Activated naive CD4-positive, alpha-beta T cell treated with anti-CD3 and anti-CD28 coated beads for 36 hours (primary cell): ENCODE measurements at regions of chr7 and their contacts with region 1.

Region 1: GRCh38 chr7:26864309-26865093 is at the start of gene SKAP2:
- DNase-seq: peak; percentile 94
- H3K4me3 Mint-ChIP-seq: peak within 1 kb of the TSS; percentile 83
- H3K27ac Mint-ChIP-seq: peak within 1 kb of the TSS; percentile 17
- H3K4me1 Mint-ChIP-seq: peaks cover 13% of the 10 kb centered on the region
- H3K27me3 Mint-ChIP-seq: peaks cover 46% of the 10 kb centered on the region
- total RNA-seq, gene SKAP2: 5.6 to 6.6 TPM

Region 2: GRCh38 chr7:26151953-26152781 is 712.3 kb before region 1 on chr7 and contains the start of gene NFE2L3:
- CTCF ChIA-PET with region 1: no interaction called
- intact Hi-C with region 1: loop called (anchors 10 kb)
- DNase-seq: peak; percentile 86
- H3K4me3 Mint-ChIP-seq: peak within 1 kb of the TSS; percentile 95
- H3K27ac Mint-ChIP-seq: peak within 1 kb of the TSS; percentile 98
- H3K4me1 Mint-ChIP-seq: peaks cover 50% of the 10 kb centered on the region
- H3K27me3 Mint-ChIP-seq: no peaks in the 10 kb centered on the region
- total RNA-seq, gene NFE2L3: 12.5 to 12.9 TPM

Region 3: DNA sequence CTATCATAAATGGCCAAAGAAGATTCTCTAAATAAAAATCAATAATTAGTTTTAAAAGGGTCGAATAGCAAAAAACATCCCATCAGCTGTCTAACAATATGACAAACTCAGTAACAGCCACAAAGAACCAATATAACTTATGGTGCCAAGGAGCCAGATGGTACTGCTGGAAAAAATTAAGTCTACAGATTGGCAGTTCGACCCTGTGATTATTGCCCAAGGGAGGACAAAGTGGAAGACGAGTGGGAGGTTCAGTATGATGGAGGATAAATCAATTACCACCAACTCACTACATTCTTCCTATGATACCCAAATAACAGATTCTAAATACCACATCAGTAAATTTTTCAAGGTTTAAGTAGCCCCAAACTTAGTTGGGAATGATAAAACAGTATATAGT is 49.1 kb before region 1 on chr7:
- CTCF ChIA-PET with region 1: no interaction called
- intact Hi-C with region 1: no loop called
- DNase-seq: no peak
- H3K4me3 Mint-ChIP-seq: no peak overlapping the region
- H3K27ac Mint-ChIP-seq: no peak overlapping the region
- H3K4me1 Mint-ChIP-seq: no peaks in the 10 kb centered on the region
- H3K27me3 Mint-ChIP-seq: peaks cover 9% of the 10 kb centered on the region

Region 4: GRCh38 chr7:26937939-26938623 is 73.6 kb after region 1 on chr7:
- CTCF ChIA-PET with region 1: no interaction called
- intact Hi-C with region 1: no loop called
- DNase-seq: no peak
- H3K4me3 Mint-ChIP-seq: no peak overlapping the region
- H3K27ac Mint-ChIP-seq: no peak overlapping the region
- H3K4me1 Mint-ChIP-seq: no peaks in the 10 kb centered on the region
- H3K27me3 Mint-ChIP-seq: peaks cover 7% of the 10 kb centered on the region

Region 5: DNA sequence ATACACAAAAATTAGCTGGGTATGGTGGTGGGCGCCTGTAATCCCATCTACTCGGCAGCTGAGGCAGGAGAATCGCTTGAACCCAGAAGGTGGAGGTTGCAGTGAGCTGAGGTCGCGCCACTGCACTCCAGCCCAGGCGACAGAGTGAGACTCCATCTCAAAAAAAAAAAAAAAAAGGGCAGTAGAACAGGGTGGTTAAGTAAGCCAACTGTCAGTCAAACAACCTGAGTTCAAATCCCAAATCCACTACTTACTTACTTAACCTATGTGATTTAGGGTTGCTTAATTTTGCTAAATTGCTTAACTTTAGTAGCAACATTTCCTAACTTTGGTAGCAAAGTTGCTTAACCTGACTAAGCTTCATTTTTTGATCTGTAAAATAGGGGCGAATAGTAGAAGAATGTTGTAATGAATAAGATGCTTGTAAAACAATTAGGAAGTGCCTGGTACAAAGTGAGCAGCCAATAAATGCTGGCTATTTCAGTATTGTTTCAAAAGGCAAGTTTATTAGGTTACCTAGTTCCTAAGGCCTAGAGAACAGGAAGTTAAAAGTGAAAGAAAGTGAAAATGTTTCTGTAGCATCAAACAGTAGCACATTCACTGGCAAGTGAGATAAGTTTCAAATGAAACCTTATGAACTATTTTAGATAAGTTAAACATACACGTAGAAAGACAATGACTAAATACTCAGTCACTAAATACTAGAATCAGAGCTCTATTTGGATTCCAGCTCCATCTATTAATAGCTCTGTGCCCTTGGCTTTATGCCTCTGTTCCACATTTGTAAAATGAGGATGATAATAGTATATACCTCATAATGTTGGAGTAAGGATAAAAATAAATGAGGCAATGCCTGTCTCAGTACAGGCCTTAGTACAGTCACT is 167.0 kb after region 1 on chr7:
- CTCF ChIA-PET with region 1: no interaction called
- intact Hi-C with region 1: loop called (anchors 1 kb)
- DNase-seq: no peak
- H3K4me3 Mint-ChIP-seq: no peak overlapping the region
- H3K27ac Mint-ChIP-seq: peak overlapping the region; percentile 61
- H3K4me1 Mint-ChIP-seq: peaks cover 26% of the 10 kb centered on the region
- H3K27me3 Mint-ChIP-seq: no peaks in the 10 kb centered on the region

Region 6: GRCh38 chr7:27134392-27134791 is 269.9 kb after region 1 on chr7:
- CTCF ChIA-PET with region 1: no interaction called
- intact Hi-C with region 1: loop called (anchors 1 kb)
- DNase-seq: peak; percentile 64
- H3K4me3 Mint-ChIP-seq: no peak overlapping the region
- H3K27ac Mint-ChIP-seq: peak overlapping the region; percentile 51
- H3K4me1 Mint-ChIP-seq: peaks cover 19% of the 10 kb centered on the region
- H3K27me3 Mint-ChIP-seq: peaks cover 54% of the 10 kb centered on the region

Region 7: GRCh38 chr7:27242555-27243339 is 378.2 kb after region 1 on chr7 and contains the start of gene EVX1:
- CTCF ChIA-PET with region 1: no interaction called
- intact Hi-C with region 1: loop called (anchors 5 kb)
- DNase-seq: peak; percentile 78
- H3K4me3 Mint-ChIP-seq: peak within 1 kb of the TSS; percentile 58
- H3K27ac Mint-ChIP-seq: no peak within 1 kb of the TSS
- H3K4me1 Mint-ChIP-seq: peaks cover 25% of the 10 kb centered on the region
- H3K27me3 Mint-ChIP-seq: peaks cover 79% of the 10 kb centered on the region
- total RNA-seq, gene EVX1: not detected

Region 8: GRCh38 chr7:28037220-28038010 is 1172.9 kb after region 1 on chr7:
- CTCF ChIA-PET with region 1: no interaction called
- intact Hi-C with region 1: loop called (anchors 10 kb)
- DNase-seq: peak; percentile 50
- H3K4me3 Mint-ChIP-seq: no peak overlapping the region
- H3K27ac Mint-ChIP-seq: no peak overlapping the region
- H3K4me1 Mint-ChIP-seq: peaks cover 26% of the 10 kb centered on the region
- H3K27me3 Mint-ChIP-seq: peaks cover 16% of the 10 kb centered on the region